CD4-positive, alpha-beta memory T cell (primary cell): ENCODE measurements at regions of chr7 and their contacts with region 1.

Region 1: GRCh38 chr7:10939911-10940703 is 33.6 kb upstream of the PHF14 start:
- DNase-seq: peak; percentile 91 to 94 (median 93)
- H3K4me3 ChIP-seq: peak overlapping the region; percentile 82 to 90
- H3K4me3 Mint-ChIP-seq: no peak overlapping the region
- H3K27ac ChIP-seq: peak overlapping the region; percentile 87
- H3K27ac Mint-ChIP-seq: no peak overlapping the region
- H3K4me1 ChIP-seq: peaks cover 27% of the 10 kb centered on the region
- H3K4me1 Mint-ChIP-seq: peaks cover 17 to 34% (median 18%) of the 10 kb centered on the region in 4 donors
- H3K27me3 ChIP-seq: no peaks in the 10 kb centered on the region
- H3K27me3 Mint-ChIP-seq: no peaks in the 10 kb centered on the region

Region 2: GRCh38 chr7:10973061-10973944 is 33.2 kb after region 1 on chr7 and contains the start of gene PHF14:
- CTCF ChIA-PET with region 1: interaction called, 10 read pairs
- POLR2A ChIA-PET with region 1: interaction called, 92 read pairs
- intact Hi-C with region 1: loop called (anchors 1 kb)
- DNase-seq: peak; percentile 93 to 96 (median 96)
- H3K4me3 ChIP-seq: peak within 1 kb of the TSS; percentile 81 to 90
- H3K4me3 Mint-ChIP-seq: peak within 1 kb of the TSS; percentile 90 to 98 (median 96)
- H3K27ac ChIP-seq: peak within 1 kb of the TSS; percentile 63
- H3K27ac Mint-ChIP-seq: peak within 1 kb of the TSS; percentile 93 to 99 (median 97)
- H3K4me1 ChIP-seq: peaks cover 37% of the 10 kb centered on the region
- H3K4me1 Mint-ChIP-seq: peaks cover 24 to 50% (median 32%) of the 10 kb centered on the region in 4 donors
- H3K27me3 ChIP-seq: no peaks in the 10 kb centered on the region
- H3K27me3 Mint-ChIP-seq: no peaks in the 10 kb centered on the region
- total RNA-seq, gene PHF14: 32.2 to 34.0 TPM